GM10248 (cell line): ENCODE measurements at regions of chr15 and their contacts with region 1.

Region 1: DNA sequence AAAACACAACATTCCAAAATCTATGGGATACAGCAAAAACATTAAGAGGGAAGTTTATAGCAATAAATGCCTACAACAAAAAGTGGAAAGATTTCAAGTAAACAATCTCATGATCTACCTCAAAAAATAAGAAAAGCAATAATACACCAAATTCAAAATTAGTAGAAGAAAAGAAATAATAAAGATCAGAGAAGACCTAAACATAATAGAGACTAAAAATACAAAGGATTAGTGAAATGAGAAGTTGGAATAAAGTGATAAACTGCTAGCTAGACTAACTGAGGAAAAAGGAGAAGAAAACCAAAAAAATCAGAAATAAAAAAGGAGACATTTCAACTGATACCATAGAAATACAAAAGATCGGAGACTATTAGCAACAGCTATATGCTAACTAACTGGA is 1027.6 kb downstream of the AGBL1 start:
- DNase-seq: no peak
- CTCF ChIP-seq: no peak

Region 2: DNA sequence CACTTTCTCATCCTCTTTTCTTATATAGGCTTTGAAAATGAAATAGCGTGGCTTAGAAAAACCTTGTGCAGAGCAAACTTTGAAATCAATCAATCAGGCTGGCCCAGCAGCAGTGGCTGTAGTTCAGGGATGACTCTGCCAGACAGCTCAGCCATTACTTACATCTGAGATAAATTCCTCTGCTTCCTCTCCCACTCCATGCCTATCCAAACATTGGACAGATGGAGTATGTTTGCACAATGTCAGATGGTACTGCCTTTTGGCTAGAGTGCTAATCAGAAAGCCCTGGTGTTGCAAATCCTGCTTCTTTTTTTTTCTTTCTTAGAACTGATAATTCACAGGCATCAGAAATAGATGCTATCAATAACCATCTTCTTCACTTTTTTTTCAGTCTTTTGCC is 37.5 kb after region 1 on chr15:
- CTCF ChIA-PET with region 1: no interaction called
- POLR2A ChIA-PET with region 1: interaction called, 17 read pairs
- DNase-seq: no peak
- CTCF ChIP-seq: no peak

Region 3: GRCh38 chr15:87450314-87450713 is 343.1 kb after region 1 on chr15:
- CTCF ChIA-PET with region 1: no interaction called
- POLR2A ChIA-PET with region 1: no interaction called
- DNase-seq: no peak
- CTCF ChIP-seq: no peak